Gastrocnemius medialis (tissue), 4 donors: ENCODE measurements at regions of chr19 and their contacts with region 1.

Region 1: GRCh38 chr19:38224014-38224862 is at the start of gene DPF1:
- DNase-seq: no peak
- ATAC-seq: no peak
- H3K4me3 ChIP-seq: peak within 1 kb of the TSS; percentile 34 to 51 (median 45)
- H3K27ac ChIP-seq: no peak within 1 kb of the TSS
- H3K4me1 ChIP-seq: peaks cover 0 to 20% of the 10 kb centered on the region in 2 donors
- H3K27me3 ChIP-seq: peaks cover 55 to 79% (median 57%) of the 10 kb centered on the region in 3 donors
- CTCF ChIP-seq: no peak
- POLR2A ChIP-seq: no peak
- total RNA-seq, gene DPF1: not detected

Region 2: GRCh38 chr19:38004521-38005223 is 219.6 kb before region 1 on chr19:
- in situ Hi-C with region 1: no loop called
- intact Hi-C with region 1: no loop called
- DNase-seq: peak; percentile 79 to 82
- ATAC-seq: peak; percentile 98
- H3K4me3 ChIP-seq: peak overlapping the region; percentile 33 to 49 (median 45)
- H3K27ac ChIP-seq: peak overlapping the region; percentile 56 to 75 (median 64)
- H3K4me1 ChIP-seq: peaks cover 14 to 15% of the 10 kb centered on the region in 2 donors
- H3K27me3 ChIP-seq: no peaks in the 10 kb centered on the region
- CTCF ChIP-seq: no peak
- POLR2A ChIP-seq: peak; percentile 51 to 61

Region 3: GRCh38 chr19:38033658-38034498 is 190.4 kb before region 1 on chr19:
- in situ Hi-C with region 1: no loop called
- intact Hi-C with region 1: no loop called
- DNase-seq: no peak
- ATAC-seq: no peak
- H3K4me3 ChIP-seq: no peak overlapping the region
- H3K27ac ChIP-seq: no peak overlapping the region
- H3K4me1 ChIP-seq: peaks cover 24 to 25% of the 10 kb centered on the region in 2 donors
- H3K27me3 ChIP-seq: no peaks in the 10 kb centered on the region
- CTCF ChIP-seq: no peak
- POLR2A ChIP-seq: no peak

Region 4: GRCh38 chr19:38209671-38210457 is 14.4 kb before region 1 on chr19:
- in situ Hi-C with region 1: no loop called
- intact Hi-C with region 1: loop called (anchors 1 kb)
- DNase-seq: peak; percentile 54 to 73
- ATAC-seq: peak; percentile 65 to 67
- H3K4me3 ChIP-seq: peak overlapping the region; percentile 11 to 39 (median 26)
- H3K27ac ChIP-seq: peak overlapping the region; percentile 36 to 77 (median 74)
- H3K4me1 ChIP-seq: peaks cover 7 to 12% of the 10 kb centered on the region in 2 donors
- H3K27me3 ChIP-seq: peaks cover 9 to 52% (median 49%) of the 10 kb centered on the region in 3 donors
- CTCF ChIP-seq: no peak
- POLR2A ChIP-seq: peak in 1 of 2 donors; percentile 62